CD8-positive, alpha-beta memory T cell (primary cell): ENCODE measurements at regions of chr12 and their contacts with region 1.

Region 1: GRCh38 chr12:120649442-120650232 is 9.2 kb downstream of the CABP1 start:
- DNase-seq: no peak
- H3K4me3 ChIP-seq: no peak overlapping the region
- H3K4me3 Mint-ChIP-seq: peak overlapping the region in 3 of 7 donors; percentile 16 to 30 (median 22)
- H3K27ac ChIP-seq: no peak overlapping the region
- H3K27ac Mint-ChIP-seq: peak overlapping the region in 1 of 8 donors; percentile 48
- H3K4me1 ChIP-seq: peaks cover 8% of the 10 kb centered on the region
- H3K4me1 Mint-ChIP-seq: peaks cover 10 to 12% (median 10%) of the 10 kb centered on the region in 3 donors
- H3K27me3 ChIP-seq: peaks cover 30% of the 10 kb centered on the region
- H3K27me3 Mint-ChIP-seq: peaks cover 40 to 67% of the 10 kb centered on the region in 2 donors

Region 2: DNA sequence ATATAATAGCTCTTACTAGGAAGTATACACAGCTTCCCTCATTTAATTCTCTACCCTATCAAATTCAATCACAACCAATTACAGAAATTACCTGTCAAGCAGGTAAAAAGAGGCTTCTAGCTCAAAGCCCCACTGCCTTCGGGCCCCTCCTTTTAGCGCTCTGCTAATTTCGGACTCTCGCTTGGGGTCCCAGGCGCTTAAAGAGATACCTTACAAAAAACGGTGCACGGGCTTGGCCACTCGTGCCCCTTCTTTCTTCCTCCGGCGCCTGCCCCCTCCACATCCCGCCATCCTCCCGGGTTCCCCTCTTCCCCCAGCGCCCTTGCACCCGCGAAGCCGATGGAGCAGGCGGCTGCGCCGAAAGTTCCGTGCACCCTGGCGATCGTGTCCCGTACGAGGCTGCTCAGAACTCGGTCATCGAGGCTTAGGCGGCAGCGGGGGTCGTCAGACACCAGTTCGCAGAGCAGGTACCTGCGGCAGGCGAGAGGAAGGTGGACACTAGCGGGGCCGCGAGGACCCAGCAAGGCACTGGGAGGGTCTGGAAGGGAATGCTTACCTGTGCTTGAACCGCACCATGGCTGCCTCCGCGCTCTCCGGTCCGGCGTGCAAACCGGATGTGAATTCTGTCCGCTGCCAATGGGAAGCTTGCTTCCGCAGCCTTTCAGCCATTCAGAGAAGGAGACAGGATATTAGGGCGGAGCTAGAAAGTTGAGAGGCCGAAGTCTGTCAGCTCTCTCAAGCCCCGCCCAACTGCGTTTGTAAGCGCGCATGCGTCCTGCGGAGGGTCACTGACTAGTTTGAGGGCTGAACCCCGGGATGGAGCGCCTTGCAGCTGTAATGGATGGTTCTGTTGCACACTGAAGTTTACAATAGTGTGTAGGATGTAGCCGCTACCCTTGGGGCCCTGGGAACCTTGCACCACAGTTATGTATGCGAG is 68.6 kb before region 1 on chr12 and contains the start of gene POP5:
- CTCF ChIA-PET with region 1: interaction called, 85 read pairs
- POLR2A ChIA-PET with region 1: no interaction called
- DNase-seq: peak; percentile 89 to 96 (median 91)
- H3K4me3 ChIP-seq: peak within 1 kb of the TSS; percentile 97
- H3K4me3 Mint-ChIP-seq: peak within 1 kb of the TSS; percentile 97 to 100 (median 98)
- H3K27ac ChIP-seq: peak within 1 kb of the TSS; percentile 75
- H3K27ac Mint-ChIP-seq: peak within 1 kb of the TSS; percentile 87 to 97 (median 92)
- H3K4me1 ChIP-seq: peaks cover 16% of the 10 kb centered on the region
- H3K4me1 Mint-ChIP-seq: peaks cover 31 to 49% (median 47%) of the 10 kb centered on the region in 3 donors
- H3K27me3 ChIP-seq: no peaks in the 10 kb centered on the region
- H3K27me3 Mint-ChIP-seq: peaks cover 6 to 11% of the 10 kb centered on the region in 2 donors
- total RNA-seq, gene POP5: 77.9 to 83.1 TPM

Region 3: DNA sequence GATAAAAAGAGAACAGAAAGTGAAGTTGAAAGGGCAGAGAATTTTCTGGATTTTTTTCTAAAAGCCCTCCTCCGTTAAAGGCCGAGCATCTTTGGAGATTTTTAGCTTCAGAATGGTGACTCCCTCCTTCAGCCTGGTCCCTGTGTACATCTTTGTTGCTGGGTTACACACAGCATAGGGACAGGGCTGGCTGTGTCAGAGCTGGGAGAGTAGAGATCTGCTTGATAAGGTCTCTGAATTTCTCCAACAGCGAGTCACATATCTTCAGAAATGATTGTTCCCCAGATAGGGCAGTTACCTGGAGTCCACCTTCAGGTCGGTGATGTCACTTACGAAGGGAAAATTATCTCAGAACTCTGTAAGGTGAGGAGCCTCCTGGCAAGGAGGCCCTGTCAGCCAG is 19.1 kb before region 1 on chr12:
- CTCF ChIA-PET with region 1: interaction called, 25 read pairs
- POLR2A ChIA-PET with region 1: no interaction called
- DNase-seq: no peak
- H3K4me3 ChIP-seq: no peak overlapping the region
- H3K4me3 Mint-ChIP-seq: no peak overlapping the region
- H3K27ac ChIP-seq: no peak overlapping the region
- H3K27ac Mint-ChIP-seq: no peak overlapping the region
- H3K4me1 ChIP-seq: no peaks in the 10 kb centered on the region
- H3K4me1 Mint-ChIP-seq: no peaks in the 10 kb centered on the region
- H3K27me3 ChIP-seq: no peaks in the 10 kb centered on the region
- H3K27me3 Mint-ChIP-seq: peaks cover 2 to 8% of the 10 kb centered on the region in 2 donors

Region 4: GRCh38 chr12:120686690-120687577 is 37.3 kb after region 1 on chr12 and contains the start of gene MLEC:
- CTCF ChIA-PET with region 1: interaction called, 11 read pairs
- POLR2A ChIA-PET with region 1: no interaction called
- DNase-seq: peak; percentile 99 to 100 (median 99)
- H3K4me3 ChIP-seq: peak within 1 kb of the TSS; percentile 83
- H3K4me3 Mint-ChIP-seq: peak within 1 kb of the TSS; percentile 92 to 97 (median 94)
- H3K27ac ChIP-seq: peak within 1 kb of the TSS; percentile 82
- H3K27ac Mint-ChIP-seq: peak within 1 kb of the TSS; percentile 92 to 97 (median 94)
- H3K4me1 ChIP-seq: peaks cover 23% of the 10 kb centered on the region
- H3K4me1 Mint-ChIP-seq: peaks cover 34 to 42% (median 41%) of the 10 kb centered on the region in 3 donors
- H3K27me3 ChIP-seq: no peaks in the 10 kb centered on the region
- H3K27me3 Mint-ChIP-seq: peaks cover 0 to 4% of the 10 kb centered on the region in 2 donors
- total RNA-seq, gene MLEC: 130 to 143 TPM

Region 5: GRCh38 chr12:120710031-120710804 is 60.6 kb after region 1 on chr12 and contains the start of gene UNC119B:
- CTCF ChIA-PET with region 1: interaction called, 26 read pairs
- POLR2A ChIA-PET with region 1: no interaction called
- DNase-seq: peak; percentile 68 to 86 (median 73)
- H3K4me3 ChIP-seq: peak within 1 kb of the TSS; percentile 71
- H3K4me3 Mint-ChIP-seq: peak within 1 kb of the TSS; percentile 84 to 97 (median 92)
- H3K27ac ChIP-seq: peak within 1 kb of the TSS; percentile 63
- H3K27ac Mint-ChIP-seq: peak within 1 kb of the TSS; percentile 87 to 95 (median 93)
- H3K4me1 ChIP-seq: peaks cover 25% of the 10 kb centered on the region
- H3K4me1 Mint-ChIP-seq: peaks cover 36 to 51% (median 37%) of the 10 kb centered on the region in 3 donors
- H3K27me3 ChIP-seq: no peaks in the 10 kb centered on the region
- H3K27me3 Mint-ChIP-seq: no peaks in the 10 kb centered on the region
- total RNA-seq, gene UNC119B: 29.8 to 30.5 TPM